A549 (cell line): ENCODE measurements at regions of chr4 and their contacts with region 1.

Region 1: GRCh38 chr4:121696581-121697461 is at the start of gene ANXA5:
- DNase-seq: peak; percentile 42 to 81
- ATAC-seq: peak; percentile 94 to 95
- H3K4me3 ChIP-seq: peak within 1 kb of the TSS; percentile 83
- H3K27ac ChIP-seq: peak within 1 kb of the TSS; percentile 86 to 97
- H3K4me1 ChIP-seq: peaks cover 43% of the 10 kb centered on the region
- CTCF ChIP-seq: peak; percentile 41
- EP300 ChIP-seq: no peak
- POLR2A ChIP-seq: peak; percentile 64
- RAD21 ChIP-seq: peak; percentile 45 to 70
- polyA plus RNA-seq, gene ANXA5: 330 and 356 TPM in 2 replicates

Region 2: GRCh38 chr4:121614101-121614500 is 82.7 kb before region 1 on chr4:
- CTCF ChIA-PET with region 1: no interaction called
- POLR2A ChIA-PET with region 1: no interaction called
- DNase-seq: no peak
- ATAC-seq: no peak
- H3K4me3 ChIP-seq: no peak overlapping the region
- H3K27ac ChIP-seq: no peak overlapping the region
- H3K4me1 ChIP-seq: no peaks in the 10 kb centered on the region
- CTCF ChIP-seq: no peak
- EP300 ChIP-seq: no peak
- POLR2A ChIP-seq: no peak
- RAD21 ChIP-seq: no peak

Region 3: GRCh38 chr4:121686255-121686654 is 10.6 kb before region 1 on chr4:
- CTCF ChIA-PET with region 1: interaction called, 3 read pairs
- POLR2A ChIA-PET with region 1: interaction called, 14 read pairs
- DNase-seq: peak in 1 of 2 experiments; percentile 52
- ATAC-seq: peak; percentile 36 to 55; a peak in 4 of 6 replicates
- H3K4me3 ChIP-seq: no peak overlapping the region; the same call in 2 of the 3 replicates
- H3K27ac ChIP-seq: peak overlapping the region in 1 of 2 experiments; percentile 30; a peak in 3 of 6 replicates
- H3K4me1 ChIP-seq: peaks cover 57% of the 10 kb centered on the region
- CTCF ChIP-seq: no peak
- EP300 ChIP-seq: no peak
- POLR2A ChIP-seq: no peak
- RAD21 ChIP-seq: no peak

Region 4: DNA sequence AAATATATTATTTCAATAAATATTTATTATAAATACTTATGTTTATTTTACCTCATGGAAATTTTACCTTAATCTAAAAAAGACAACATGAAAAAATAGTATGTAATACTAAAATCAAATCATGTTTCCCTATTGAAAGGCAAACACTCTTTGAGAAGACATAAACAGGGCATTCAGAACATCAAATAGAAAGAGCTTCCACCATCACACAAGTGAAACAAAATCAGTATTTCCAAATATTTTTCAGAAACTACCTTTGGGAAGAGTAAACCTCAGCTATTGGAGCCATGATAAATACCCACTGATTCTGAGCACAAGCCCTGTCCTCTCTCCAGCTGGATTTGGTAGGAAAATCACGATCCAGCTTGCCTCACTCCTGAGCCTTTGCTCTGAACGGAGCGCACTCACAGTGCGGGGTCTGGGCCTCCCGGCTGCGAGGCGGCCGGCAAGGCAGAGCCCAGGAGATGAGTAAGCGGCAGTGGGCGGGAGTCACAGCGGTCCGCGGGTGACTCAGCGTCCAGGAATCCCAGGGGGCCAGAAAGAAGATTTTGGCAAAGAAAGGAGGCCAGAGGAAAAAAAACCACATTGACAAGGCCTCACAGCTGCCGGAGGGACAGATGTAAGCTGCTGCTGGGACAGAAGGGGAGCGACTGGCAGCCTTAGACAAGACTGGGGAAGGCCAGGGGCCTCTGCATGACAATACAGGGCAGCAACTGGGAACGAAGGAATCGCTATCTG is 14.6 kb after region 1 on chr4:
- CTCF ChIA-PET with region 1: interaction called, 7 read pairs
- POLR2A ChIA-PET with region 1: interaction called, 19 read pairs
- DNase-seq: peak; percentile 65 to 74
- ATAC-seq: peak; percentile 100
- H3K4me3 ChIP-seq: peak overlapping the region; percentile 16
- H3K27ac ChIP-seq: peak overlapping the region; percentile 76 to 89
- H3K4me1 ChIP-seq: peaks cover 25% of the 10 kb centered on the region
- CTCF ChIP-seq: no peak
- EP300 ChIP-seq: no peak; a peak in 1 of 5 replicates
- POLR2A ChIP-seq: peak; percentile 42
- RAD21 ChIP-seq: no peak

Region 5: DNA sequence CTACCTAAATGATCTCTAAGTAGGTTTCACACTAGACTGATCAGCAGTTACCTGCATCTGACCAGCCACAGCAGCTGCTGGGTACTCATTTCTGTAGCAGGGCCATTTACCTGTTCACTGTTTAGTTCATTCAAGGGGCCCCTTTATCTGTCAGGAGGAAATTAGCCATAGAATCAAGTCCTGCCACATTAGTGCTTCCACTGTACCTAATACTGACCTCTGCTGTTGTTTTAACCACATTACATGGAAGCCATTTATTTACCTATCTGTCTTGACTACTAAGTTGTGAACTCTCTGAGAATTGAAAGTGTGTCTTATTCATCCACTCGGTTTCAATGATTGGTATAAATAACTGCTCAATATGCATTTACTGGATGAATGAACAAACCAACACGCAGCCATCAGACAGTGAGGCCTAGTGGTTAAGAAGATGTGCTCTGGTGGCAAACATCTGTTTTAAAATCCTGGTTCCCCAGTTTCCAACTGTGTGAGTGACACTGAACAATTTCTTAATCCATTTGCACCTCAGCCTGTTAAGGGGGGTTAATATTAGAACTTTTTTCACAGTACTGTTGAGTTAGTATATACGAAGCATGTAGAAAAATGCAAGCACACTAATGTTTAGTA is 29.9 kb after region 1 on chr4:
- CTCF ChIA-PET with region 1: interaction called, 19 read pairs
- POLR2A ChIA-PET with region 1: interaction called, 5 read pairs
- DNase-seq: peak; percentile 29 to 61
- ATAC-seq: peak; percentile 75 to 83; a peak in 5 of 6 replicates
- H3K4me3 ChIP-seq: no peak overlapping the region
- H3K27ac ChIP-seq: peak overlapping the region in 1 of 2 experiments; percentile 70; a peak in 3 of 6 replicates
- H3K4me1 ChIP-seq: peaks cover 7% of the 10 kb centered on the region; the same call in 2 of the 3 replicates
- CTCF ChIP-seq: peak; percentile 60
- EP300 ChIP-seq: no peak
- POLR2A ChIP-seq: no peak
- RAD21 ChIP-seq: peak; percentile 66 to 73